ENCODE measurements at regions of chr4 and their contacts with region 1.

Region 1: GRCh38 chr4:8403173-8403753 is 37.3 kb downstream of the ACOX3 start:
- DNase-seq: peak; percentile 47
- H3K4me3 Mint-ChIP-seq: no peak overlapping the region
- H3K27ac Mint-ChIP-seq: no peak overlapping the region
- H3K4me1 Mint-ChIP-seq: no peaks in the 10 kb centered on the region
- H3K27me3 Mint-ChIP-seq: no peaks in the 10 kb centered on the region

Region 2: GRCh38 chr4:8176547-8177399 is 226.5 kb before region 1 on chr4:
- CTCF ChIA-PET with region 1: interaction called, 19 read pairs
- POLR2A ChIA-PET with region 1: no interaction called
- DNase-seq: peak; percentile 48
- H3K4me3 Mint-ChIP-seq: no peak overlapping the region
- H3K27ac Mint-ChIP-seq: no peak overlapping the region
- H3K4me1 Mint-ChIP-seq: peaks cover 2% of the 10 kb centered on the region
- H3K27me3 Mint-ChIP-seq: peaks cover 2% of the 10 kb centered on the region

Region 3: DNA sequence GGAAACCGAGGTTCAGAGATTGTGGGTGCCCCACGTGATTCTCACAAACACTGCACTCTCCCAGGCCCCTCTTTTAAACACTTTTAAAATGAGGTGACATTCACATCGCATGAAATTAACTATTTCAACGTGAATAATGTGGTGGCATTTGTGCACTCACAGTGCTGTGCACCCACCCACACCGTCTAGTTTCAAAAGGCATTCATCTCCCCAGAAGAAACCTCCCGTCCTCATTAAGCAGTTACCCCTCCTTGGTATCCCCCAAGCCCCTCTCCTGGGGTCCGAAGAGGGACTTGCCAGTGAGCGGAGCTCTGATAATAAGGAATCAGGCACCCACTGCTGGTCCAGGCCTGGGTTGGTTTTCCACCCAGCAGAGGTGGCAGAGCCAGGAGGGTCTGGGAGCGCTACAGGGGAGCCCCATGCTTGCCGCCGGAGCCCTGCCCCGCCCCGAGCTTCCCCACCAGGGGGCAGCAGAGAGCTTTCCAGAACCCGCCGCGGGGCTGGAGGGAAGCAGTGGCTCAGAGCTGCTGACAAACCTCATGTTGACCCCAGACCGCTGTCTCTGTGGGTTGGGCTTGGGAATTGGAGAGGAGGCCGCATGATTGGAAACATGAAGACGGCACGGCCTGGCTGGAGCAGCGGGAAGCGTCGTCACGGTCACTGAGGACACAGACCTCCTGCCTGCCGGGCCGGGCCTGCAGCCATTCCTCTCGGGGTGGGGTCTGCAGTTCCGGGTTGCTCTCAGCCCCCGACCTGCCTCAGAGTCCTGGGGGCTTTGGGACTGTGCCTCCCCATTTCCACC is 161.2 kb before region 1 on chr4:
- CTCF ChIA-PET with region 1: interaction called, 11 read pairs
- POLR2A ChIA-PET with region 1: no interaction called
- DNase-seq: peak; percentile 77
- H3K4me3 Mint-ChIP-seq: no peak overlapping the region
- H3K27ac Mint-ChIP-seq: no peak overlapping the region
- H3K4me1 Mint-ChIP-seq: no peaks in the 10 kb centered on the region
- H3K27me3 Mint-ChIP-seq: no peaks in the 10 kb centered on the region

Region 4: DNA sequence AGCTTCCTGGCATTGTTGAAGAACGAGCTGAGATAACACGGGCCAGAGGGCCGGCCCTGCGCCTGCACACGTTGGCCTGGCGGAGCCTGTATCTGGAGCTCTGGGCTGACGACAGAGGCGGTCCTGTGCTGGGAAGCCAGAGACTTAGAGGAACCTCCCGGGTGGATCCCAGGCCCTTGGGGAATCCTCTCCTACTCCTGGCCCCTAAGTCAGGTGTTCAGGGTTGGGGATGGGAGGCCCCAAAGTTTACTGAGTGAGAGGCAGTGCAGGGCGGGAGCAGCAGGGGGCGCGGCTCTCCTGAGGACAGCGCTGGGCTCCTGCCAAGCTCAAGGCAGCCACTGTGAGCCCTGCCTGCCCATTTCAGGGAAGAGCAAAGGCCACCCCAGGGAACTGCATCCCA is 136.2 kb before region 1 on chr4:
- CTCF ChIA-PET with region 1: interaction called, 11 read pairs
- POLR2A ChIA-PET with region 1: no interaction called
- DNase-seq: peak; percentile 37
- H3K4me3 Mint-ChIP-seq: no peak overlapping the region
- H3K27ac Mint-ChIP-seq: no peak overlapping the region
- H3K4me1 Mint-ChIP-seq: no peaks in the 10 kb centered on the region
- H3K27me3 Mint-ChIP-seq: peaks cover 17% of the 10 kb centered on the region